ENCODE measurements at regions of chr22 and their contacts with region 1.

Region 1: DNA sequence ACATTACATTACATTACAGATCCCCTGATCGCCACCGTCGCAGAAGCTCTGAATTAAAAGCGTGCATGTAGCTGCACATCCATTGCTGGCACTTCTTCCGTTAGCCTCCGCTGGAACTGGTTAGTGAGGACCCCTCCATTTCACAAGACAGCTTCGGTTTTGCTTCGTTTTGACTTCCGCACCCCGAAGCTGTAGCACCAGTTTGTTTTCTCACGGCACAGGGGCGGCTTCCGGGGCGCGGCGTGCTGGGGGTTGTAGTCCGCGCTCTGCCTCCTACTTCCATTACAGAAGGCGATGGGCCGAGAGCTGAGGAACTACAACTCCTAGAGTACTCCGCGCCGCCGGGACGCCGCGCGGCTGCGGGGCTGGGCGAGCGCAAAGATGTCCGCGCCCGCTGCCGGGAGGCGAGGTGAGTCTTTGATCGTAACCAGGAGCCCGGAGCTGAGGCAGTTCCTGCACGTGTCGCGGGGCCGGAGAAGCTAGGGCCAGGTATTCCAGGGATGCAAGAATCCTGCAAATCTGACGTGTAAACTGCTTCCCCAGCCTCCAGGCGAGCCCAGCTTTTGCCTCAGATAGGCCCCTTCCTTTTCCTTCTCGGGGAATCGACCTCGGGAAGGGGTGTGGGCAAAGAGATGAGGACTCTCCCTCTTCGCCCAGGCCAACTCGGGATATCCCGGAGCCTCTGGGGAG is at the start of gene PEX26:
- DNase-seq: peak; percentile 93
- ATAC-seq: peak; percentile 99
- H3K4me3 Mint-ChIP-seq: peak within 1 kb of the TSS; percentile 97
- H3K27ac Mint-ChIP-seq: peak within 1 kb of the TSS; percentile 97
- H3K4me1 Mint-ChIP-seq: peaks cover 16% of the 10 kb centered on the region
- H3K27me3 Mint-ChIP-seq: no peaks in the 10 kb centered on the region
- CTCF ChIP-seq: no peak
- total RNA-seq, gene PEX26: 43.0 to 52.3 TPM (median 44.8 TPM) in 3 replicates

Region 2: GRCh38 chr22:17742527-17742902 is 335.3 kb before region 1 on chr22:
- CTCF ChIA-PET with region 1: interaction called, 45 read pairs
- POLR2A ChIA-PET with region 1: no interaction called
- DNase-seq: peak; percentile 95
- ATAC-seq: peak; percentile 91
- H3K4me3 Mint-ChIP-seq: no peak overlapping the region
- H3K27ac Mint-ChIP-seq: no peak overlapping the region; the same call in 1 of the 2 replicates
- H3K4me1 Mint-ChIP-seq: peaks cover 19% of the 10 kb centered on the region
- H3K27me3 Mint-ChIP-seq: no peaks in the 10 kb centered on the region
- CTCF ChIP-seq: peak; percentile 74

Region 3: DNA sequence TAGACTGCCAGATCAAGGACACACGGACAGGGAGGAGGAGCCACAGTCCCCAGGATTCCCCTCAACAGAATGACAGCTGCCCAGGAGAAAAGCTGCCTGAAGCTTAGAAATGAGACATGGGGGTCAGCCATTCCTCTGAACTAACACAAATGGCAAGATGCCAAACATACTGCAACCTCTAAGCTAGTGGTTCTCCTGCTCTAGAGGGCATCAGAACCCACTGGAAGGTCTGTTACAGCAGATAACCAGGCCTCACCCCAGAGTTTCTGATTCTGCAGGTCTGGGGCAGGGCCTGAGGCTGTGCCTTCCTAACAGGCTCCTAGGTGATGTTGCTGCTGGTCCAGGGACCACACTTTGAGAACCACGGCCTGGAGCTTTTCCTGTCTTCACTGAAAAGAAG is 275.0 kb before region 1 on chr22:
- CTCF ChIA-PET with region 1: no interaction called
- POLR2A ChIA-PET with region 1: no interaction called
- DNase-seq: no peak
- ATAC-seq: no peak
- H3K4me3 Mint-ChIP-seq: no peak overlapping the region
- H3K27ac Mint-ChIP-seq: no peak overlapping the region
- H3K4me1 Mint-ChIP-seq: peaks cover 16% of the 10 kb centered on the region
- H3K27me3 Mint-ChIP-seq: no peaks in the 10 kb centered on the region
- CTCF ChIP-seq: no peak

Region 4: DNA sequence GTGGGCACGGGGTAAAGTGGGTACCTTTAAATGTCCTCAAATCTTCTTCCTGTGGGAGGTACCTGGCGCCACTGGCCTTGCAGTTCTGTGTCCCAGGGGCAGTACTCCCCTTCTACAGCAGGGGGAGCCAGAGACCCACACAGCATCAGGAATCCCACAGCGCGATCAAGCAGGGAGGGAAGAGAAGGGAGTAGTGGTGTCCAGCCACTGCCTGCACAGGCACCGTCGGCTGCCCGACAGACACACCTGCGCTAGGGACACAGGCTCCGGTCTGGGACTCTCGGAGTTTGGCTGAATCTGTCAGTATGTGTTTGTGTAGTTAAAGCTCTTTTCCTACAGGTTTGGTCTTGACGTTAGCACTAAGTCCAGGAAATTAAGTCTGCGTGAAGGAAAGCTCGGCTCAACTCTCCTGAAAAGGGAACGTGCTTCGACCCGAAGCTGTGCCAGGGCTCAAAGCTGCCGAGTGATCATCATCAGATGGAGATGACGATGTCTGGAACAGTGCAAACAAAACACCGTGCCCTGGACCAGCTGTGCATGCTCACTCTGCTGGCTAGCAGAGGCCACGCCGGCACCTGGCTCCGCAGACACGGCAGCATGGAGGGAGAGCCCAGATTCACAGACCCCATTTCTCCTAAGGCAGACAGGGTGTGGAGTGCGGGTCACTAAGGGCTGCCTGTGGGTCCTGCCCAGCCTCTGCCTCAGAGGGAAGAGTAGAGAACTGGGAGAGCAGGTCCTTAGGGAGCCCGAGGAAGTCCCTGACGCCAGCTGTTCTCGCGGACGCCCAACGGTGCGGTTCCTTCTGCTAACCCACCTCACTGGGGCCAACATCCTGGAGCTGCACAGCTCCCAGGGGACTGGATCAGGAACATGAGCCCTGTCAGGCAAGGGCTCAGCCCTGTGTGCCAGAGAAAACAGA is 247.5 kb before region 1 on chr22:
- CTCF ChIA-PET with region 1: interaction called, 77 read pairs
- POLR2A ChIA-PET with region 1: interaction called, 4 read pairs
- DNase-seq: peak; percentile 94
- ATAC-seq: peak; percentile 95
- H3K4me3 Mint-ChIP-seq: no peak overlapping the region
- H3K27ac Mint-ChIP-seq: no peak overlapping the region
- H3K4me1 Mint-ChIP-seq: no peaks in the 10 kb centered on the region
- H3K27me3 Mint-ChIP-seq: no peaks in the 10 kb centered on the region
- CTCF ChIP-seq: peak; percentile 97

Region 5: DNA sequence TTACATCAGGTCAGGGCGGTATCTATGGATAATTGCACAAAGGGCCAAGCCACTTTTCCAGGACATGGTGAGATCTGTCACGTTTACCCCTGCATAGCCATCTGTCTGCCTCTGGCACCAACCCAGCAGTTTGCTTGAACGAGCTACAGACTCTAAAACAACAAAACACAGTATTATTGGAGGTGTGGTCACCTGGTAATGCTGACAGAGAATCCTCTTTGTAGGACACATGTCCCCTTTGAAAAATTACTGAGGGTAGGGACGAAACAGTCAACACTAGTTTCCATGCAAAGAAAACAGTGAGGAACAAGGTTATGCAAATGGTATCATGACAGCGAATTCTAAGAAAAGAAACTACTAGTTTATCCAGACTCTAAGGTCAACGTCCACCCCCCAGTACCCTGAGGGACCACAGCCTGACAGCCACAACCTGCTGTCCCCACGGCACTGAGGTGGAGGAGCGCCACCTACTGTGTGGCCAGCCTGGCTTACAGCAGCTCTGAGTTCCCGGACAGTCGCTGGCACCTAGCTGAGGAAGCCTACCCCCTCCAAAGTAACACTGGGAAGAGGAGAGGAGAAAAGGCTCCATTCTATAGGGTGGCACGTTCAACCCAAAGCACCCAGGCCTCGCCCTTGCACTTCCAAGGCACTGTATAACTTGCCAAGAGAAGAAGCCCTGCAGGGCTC is 186.2 kb before region 1 on chr22:
- CTCF ChIA-PET with region 1: interaction called, 107 read pairs
- POLR2A ChIA-PET with region 1: no interaction called
- DNase-seq: peak; percentile 63
- ATAC-seq: peak; percentile 49
- H3K4me3 Mint-ChIP-seq: no peak overlapping the region
- H3K27ac Mint-ChIP-seq: no peak overlapping the region
- H3K4me1 Mint-ChIP-seq: no peaks in the 10 kb centered on the region
- H3K27me3 Mint-ChIP-seq: no peaks in the 10 kb centered on the region
- CTCF ChIP-seq: no peak

Region 6: GRCh38 chr22:17920145-17920605 is 157.6 kb before region 1 on chr22:
- CTCF ChIA-PET with region 1: interaction called, 20 read pairs
- POLR2A ChIA-PET with region 1: no interaction called
- DNase-seq: peak; percentile 47
- ATAC-seq: peak; percentile 42
- H3K4me3 Mint-ChIP-seq: peak overlapping the region; percentile 12; the same call in 1 of the 2 replicates
- H3K27ac Mint-ChIP-seq: peak overlapping the region; percentile 91
- H3K4me1 Mint-ChIP-seq: peaks cover 8% of the 10 kb centered on the region; the same call in 1 of the 2 replicates
- H3K27me3 Mint-ChIP-seq: no peaks in the 10 kb centered on the region
- CTCF ChIP-seq: no peak

Region 7: DNA sequence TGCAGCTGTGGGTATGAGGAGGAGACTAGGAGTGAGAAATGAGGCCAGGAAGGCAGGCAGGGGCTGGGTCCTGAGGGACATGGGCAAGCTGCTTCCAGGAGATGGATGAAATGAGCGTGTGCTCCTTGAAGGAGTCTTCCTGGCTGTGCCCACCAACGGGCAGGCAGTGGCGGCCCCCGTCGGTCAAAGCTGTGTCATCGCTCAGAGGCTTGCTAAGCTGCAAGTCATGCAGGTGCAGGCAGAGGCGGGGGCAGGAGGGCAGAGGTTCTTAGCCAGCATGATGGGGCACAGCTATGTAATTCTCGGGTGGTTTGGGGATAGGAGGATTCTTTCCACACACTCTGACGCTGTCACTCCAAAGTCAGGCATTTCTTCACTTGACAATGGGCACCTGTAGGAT is 12.5 kb before region 1 on chr22:
- CTCF ChIA-PET with region 1: interaction called, 15 read pairs
- POLR2A ChIA-PET with region 1: no interaction called
- DNase-seq: peak; percentile 55
- ATAC-seq: peak; percentile 71
- H3K4me3 Mint-ChIP-seq: no peak overlapping the region
- H3K27ac Mint-ChIP-seq: no peak overlapping the region
- H3K4me1 Mint-ChIP-seq: no peaks in the 10 kb centered on the region
- H3K27me3 Mint-ChIP-seq: peaks cover 3% of the 10 kb centered on the region
- CTCF ChIP-seq: no peak

Region 8: GRCh38 chr22:18103527-18104269 is 25.9 kb after region 1 on chr22:
- CTCF ChIA-PET with region 1: no interaction called
- POLR2A ChIA-PET with region 1: no interaction called
- DNase-seq: no peak
- ATAC-seq: no peak
- H3K4me3 Mint-ChIP-seq: no peak overlapping the region
- H3K27ac Mint-ChIP-seq: no peak overlapping the region
- H3K4me1 Mint-ChIP-seq: no peaks in the 10 kb centered on the region
- H3K27me3 Mint-ChIP-seq: peaks cover 26% of the 10 kb centered on the region
- CTCF ChIP-seq: no peak

Region 9: DNA sequence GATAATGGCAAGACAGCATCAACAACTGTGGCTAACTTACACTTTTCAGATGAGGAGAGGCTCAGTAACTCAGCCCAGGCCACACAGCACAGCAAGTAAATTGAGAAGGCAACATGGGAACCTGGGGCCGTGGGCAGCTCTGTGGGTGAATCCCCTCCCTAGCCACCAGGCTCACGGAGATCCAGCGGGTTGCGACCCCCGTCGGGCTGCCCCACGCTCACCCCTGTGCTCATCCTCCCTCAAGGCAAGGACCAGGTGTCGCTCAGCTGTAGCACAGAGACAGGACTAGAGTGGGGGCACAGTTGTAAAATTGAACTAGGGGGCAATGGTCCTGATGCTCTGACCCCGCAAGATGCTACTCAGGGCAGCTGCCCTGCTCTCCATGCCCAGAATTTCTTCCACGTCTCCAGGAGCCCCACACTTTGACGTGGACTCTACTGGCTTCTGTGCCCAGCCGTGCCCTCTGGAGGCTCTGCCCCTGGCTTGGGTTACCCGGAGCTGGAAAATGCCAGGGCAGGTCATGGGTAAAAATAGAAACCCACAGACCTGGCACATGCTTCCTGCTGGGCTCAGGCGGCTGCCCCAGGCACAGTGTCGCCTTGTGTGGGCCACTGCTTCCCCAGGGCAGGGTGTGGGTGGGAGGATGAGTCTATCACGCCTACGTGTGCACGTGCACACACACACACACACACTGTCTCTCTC is 41.8 kb after region 1 on chr22:
- CTCF ChIA-PET with region 1: no interaction called
- POLR2A ChIA-PET with region 1: no interaction called
- DNase-seq: no peak
- ATAC-seq: no peak
- H3K4me3 Mint-ChIP-seq: no peak overlapping the region
- H3K27ac Mint-ChIP-seq: no peak overlapping the region
- H3K4me1 Mint-ChIP-seq: no peaks in the 10 kb centered on the region
- H3K27me3 Mint-ChIP-seq: no peaks in the 10 kb centered on the region
- CTCF ChIP-seq: no peak

Region 10: GRCh38 chr22:18136563-18137320 is 59.0 kb after region 1 on chr22:
- CTCF ChIA-PET with region 1: no interaction called
- POLR2A ChIA-PET with region 1: no interaction called
- DNase-seq: no peak
- ATAC-seq: peak; percentile 32; the same call in 1 of the 2 replicates
- H3K4me3 Mint-ChIP-seq: no peak overlapping the region
- H3K27ac Mint-ChIP-seq: no peak overlapping the region
- H3K4me1 Mint-ChIP-seq: peaks cover 18% of the 10 kb centered on the region
- H3K27me3 Mint-ChIP-seq: no peaks in the 10 kb centered on the region; the same call in 1 of the 2 replicates
- CTCF ChIP-seq: no peak

Measured in WTC11 (cell line).